ENCODE measurements at regions of chr10 and their contacts with region 1.

Region 1: DNA sequence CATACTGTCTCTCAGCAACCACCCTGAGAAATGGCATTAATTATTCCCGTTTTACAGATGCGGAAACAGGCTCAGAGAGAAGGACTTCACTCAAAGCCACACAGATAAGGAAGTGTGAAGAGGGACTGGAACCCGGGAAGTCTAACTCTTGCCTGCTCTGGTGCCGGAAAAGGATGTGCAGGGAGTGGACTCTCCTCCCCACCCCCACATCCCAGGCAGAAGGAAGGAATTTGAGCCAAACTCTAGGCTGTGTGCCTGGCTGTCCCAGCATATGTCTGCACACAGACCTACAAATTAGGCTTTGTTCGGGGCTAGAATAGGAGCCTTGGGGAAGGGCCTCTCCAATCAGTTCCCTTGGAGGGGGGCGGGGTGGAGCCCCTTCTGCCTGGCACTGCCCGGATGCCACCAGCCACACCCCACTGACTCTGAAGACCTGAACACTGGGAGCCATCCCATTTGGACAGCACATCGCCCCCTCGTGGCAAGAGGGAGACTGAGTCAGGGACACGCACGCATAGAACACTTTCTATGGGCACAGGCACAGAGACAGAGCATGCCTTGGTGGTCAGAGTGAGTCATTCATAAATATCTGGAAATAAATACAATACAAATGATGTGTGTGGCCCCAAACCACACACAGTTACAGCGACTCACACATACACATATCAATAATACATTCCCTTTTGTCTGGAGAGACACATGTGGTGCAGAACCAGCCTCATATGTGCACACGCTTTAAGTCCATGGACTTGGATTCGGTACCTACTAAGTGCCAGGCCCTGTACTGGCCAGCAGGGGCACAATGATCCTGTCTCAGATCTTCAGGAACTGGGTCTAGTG is 13.1 kb downstream of the LZTS2 start:
- DNase-seq: peak; percentile 85
- H3K4me3 Mint-ChIP-seq: no peak overlapping the region
- H3K27ac Mint-ChIP-seq: no peak overlapping the region
- H3K4me1 Mint-ChIP-seq: peaks cover 12% of the 10 kb centered on the region
- H3K27me3 Mint-ChIP-seq: peaks cover 29% of the 10 kb centered on the region

Region 2: DNA sequence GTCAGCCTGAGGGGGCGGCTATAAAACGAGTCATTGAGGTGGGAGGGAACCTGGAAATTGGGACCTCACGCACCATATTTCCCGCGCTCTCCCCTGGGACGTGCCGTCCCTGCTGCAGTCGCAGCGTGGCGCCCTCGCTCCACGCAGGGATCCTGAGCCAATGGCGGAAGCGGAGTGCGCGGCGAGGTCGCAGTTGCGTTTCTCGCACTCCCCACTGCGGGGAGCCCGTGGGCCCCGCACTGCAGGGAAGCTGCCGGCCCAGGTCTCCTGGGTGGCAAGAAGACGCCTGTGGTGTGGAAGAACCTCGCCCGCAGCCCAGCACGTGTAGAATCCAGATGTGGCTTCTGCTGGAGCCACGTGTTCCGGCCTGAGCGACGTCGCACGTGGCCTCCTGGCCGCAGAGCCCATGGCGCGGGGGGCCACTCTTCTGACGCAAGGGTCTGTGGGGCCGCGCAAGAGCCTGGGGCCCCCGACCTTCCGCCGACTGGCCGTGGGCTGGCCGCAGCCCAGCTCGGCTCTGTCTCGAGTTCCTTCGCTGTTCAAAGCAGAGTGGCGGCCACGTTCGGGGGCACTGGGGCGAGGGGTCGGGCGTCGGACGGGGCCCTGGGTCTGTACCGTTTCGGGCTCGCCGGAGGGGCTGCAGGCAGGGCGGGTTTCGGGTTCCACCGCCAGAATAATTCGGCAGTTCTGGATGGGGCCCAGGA is 450.6 kb before region 1 on chr10:
- CTCF ChIA-PET with region 1: interaction called, 4 read pairs
- intact Hi-C with region 1: loop called (anchors 1 kb)
- DNase-seq: peak; percentile 85
- H3K4me3 Mint-ChIP-seq: no peak overlapping the region
- H3K27ac Mint-ChIP-seq: no peak overlapping the region
- H3K4me1 Mint-ChIP-seq: peaks cover 9% of the 10 kb centered on the region
- H3K27me3 Mint-ChIP-seq: peaks cover 20% of the 10 kb centered on the region

Region 3: GRCh38 chr10:100827819-100828737 is 184.7 kb before region 1 on chr10:
- CTCF ChIA-PET with region 1: no interaction called
- intact Hi-C with region 1: loop called (anchors 5 kb)
- DNase-seq: peak; percentile 50
- H3K4me3 Mint-ChIP-seq: peak overlapping the region; percentile 66
- H3K27ac Mint-ChIP-seq: no peak overlapping the region
- H3K4me1 Mint-ChIP-seq: peaks cover 19% of the 10 kb centered on the region
- H3K27me3 Mint-ChIP-seq: peaks cover 74% of the 10 kb centered on the region

Region 4: GRCh38 chr10:100866575-100867098 is 146.1 kb before region 1 on chr10:
- CTCF ChIA-PET with region 1: no interaction called
- intact Hi-C with region 1: no loop called
- DNase-seq: no peak
- H3K4me3 Mint-ChIP-seq: no peak overlapping the region
- H3K27ac Mint-ChIP-seq: no peak overlapping the region
- H3K4me1 Mint-ChIP-seq: peaks cover 3% of the 10 kb centered on the region
- H3K27me3 Mint-ChIP-seq: peaks cover 24% of the 10 kb centered on the region

Region 5: DNA sequence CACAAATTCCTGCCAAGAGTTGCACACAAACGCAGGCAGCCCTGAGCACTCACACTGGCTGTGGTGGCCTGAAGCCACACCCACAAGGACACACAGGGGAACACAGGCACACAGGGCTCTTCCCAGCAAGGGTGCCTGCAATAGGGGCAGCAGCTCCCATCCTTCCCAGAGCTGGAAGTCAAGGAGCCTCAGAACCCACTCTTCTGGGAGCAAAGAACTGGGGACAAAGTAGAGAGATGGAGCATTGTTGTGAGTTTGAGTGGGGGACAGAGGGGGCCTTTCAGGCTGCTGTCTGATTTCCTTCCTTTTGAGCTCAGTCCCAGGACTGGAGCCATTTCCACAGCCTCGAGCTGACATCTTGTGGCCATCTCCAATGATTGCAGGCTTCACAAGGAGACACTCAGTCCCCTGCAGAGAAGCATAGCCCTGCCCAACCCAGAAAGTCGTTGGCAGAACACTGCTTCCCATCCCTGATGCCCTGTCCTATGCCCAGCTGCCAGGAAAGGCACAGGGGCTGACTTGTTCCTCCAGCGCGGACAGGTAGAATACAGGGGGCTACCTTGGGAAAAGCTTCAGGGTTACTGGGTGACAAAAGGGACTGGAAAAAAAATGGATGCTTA is 134.3 kb before region 1 on chr10:
- CTCF ChIA-PET with region 1: interaction called, 4 read pairs
- intact Hi-C with region 1: loop called (anchors 2 kb)
- DNase-seq: peak; percentile 64
- H3K4me3 Mint-ChIP-seq: no peak overlapping the region
- H3K27ac Mint-ChIP-seq: no peak overlapping the region
- H3K4me1 Mint-ChIP-seq: no peaks in the 10 kb centered on the region
- H3K27me3 Mint-ChIP-seq: peaks cover 10% of the 10 kb centered on the region

Region 6: DNA sequence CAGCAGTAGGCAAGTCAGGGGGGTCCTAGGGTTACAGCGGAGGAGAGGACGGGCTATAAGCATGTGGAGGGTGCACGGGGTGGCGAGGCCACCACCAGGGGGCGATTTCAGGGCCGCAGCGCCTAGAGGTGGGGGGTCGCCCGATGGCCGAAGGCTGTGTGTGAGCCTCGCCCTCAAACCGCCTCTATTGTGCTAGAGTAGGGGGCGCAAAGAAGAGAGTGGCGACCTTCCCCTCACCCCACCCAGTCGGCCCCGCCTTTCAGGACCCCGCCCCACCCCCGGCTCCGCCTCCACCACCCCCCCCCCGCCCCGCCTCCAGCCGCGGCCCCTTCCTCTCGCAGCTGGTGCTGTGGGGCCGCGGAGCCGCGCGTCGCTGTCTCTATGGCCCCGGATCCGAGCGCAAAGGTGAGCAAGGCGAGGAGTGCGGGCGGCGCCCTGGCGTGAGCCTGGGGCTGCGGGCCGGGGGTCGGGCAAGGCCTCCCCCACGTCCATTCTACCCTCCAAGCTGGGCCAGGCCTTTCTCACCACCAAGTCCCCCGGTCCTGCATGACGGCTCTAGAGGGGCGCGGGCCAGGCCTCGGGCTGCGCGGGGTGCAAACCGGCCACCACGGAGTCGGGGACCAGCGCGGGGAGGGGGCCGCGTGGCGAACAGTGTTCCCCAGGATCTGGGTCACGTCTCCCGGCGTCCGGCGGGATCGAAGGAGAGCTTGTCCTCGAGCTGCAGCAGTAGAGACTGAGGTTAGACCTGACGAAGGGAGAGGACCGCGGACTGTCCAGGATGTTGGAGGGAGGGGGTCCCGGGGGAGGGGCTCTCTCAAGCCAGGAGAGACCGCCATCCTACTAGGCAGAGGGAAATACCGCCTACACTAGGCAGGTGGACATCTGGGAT is 43.3 kb before region 1 on chr10 and contains the start of gene SEMA4G:
- CTCF ChIA-PET with region 1: interaction called, 8 read pairs
- intact Hi-C with region 1: loop called (anchors 5 kb)
- DNase-seq: peak; percentile 32
- H3K4me3 Mint-ChIP-seq: peak within 1 kb of the TSS; percentile 59
- H3K27ac Mint-ChIP-seq: no peak within 1 kb of the TSS
- H3K4me1 Mint-ChIP-seq: peaks cover 8% of the 10 kb centered on the region
- H3K27me3 Mint-ChIP-seq: no peaks in the 10 kb centered on the region
- total RNA-seq, gene SEMA4G: 0.48 to 0.59 TPM

Region 7: DNA sequence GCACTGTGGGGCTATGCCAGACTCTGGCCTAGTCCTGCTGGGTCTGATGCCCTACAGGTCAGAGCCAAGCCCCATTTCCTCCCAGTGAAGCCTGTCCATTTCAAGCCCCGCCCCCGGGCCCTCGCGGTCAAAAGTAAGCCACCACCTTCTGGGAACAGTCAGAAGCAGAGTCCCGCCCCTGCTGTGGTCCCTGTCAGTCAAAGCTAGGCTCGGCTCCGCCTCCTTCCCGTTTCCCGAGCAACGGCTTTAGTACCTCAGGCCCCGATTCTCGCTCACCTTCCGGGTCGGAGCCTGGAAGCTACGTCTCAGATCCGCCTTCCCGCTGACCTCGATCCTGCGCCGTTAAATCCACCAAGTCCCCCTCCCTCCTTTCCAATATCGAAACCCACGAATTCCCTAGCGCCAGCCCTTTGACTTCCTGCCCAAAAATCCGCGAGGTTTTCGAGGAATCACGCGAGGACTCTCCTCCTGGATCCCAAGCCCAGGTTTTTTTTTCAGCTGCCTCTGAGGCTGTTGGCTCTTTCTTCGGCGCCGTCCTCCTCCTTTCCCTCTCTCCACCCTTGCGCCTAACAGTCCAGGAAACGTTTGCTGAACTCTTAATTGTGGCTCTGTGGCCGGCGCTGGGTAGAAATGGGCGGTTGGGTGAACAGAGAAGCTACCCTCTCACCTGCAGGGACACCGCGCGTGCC is 30.1 kb after region 1 on chr10:
- CTCF ChIA-PET with region 1: interaction called, 19 read pairs
- intact Hi-C with region 1: no loop called
- DNase-seq: peak; percentile 97
- H3K4me3 Mint-ChIP-seq: peak overlapping the region; percentile 91
- H3K27ac Mint-ChIP-seq: peak overlapping the region; percentile 74
- H3K4me1 Mint-ChIP-seq: peaks cover 22% of the 10 kb centered on the region
- H3K27me3 Mint-ChIP-seq: peaks cover 17% of the 10 kb centered on the region

Region 8: DNA sequence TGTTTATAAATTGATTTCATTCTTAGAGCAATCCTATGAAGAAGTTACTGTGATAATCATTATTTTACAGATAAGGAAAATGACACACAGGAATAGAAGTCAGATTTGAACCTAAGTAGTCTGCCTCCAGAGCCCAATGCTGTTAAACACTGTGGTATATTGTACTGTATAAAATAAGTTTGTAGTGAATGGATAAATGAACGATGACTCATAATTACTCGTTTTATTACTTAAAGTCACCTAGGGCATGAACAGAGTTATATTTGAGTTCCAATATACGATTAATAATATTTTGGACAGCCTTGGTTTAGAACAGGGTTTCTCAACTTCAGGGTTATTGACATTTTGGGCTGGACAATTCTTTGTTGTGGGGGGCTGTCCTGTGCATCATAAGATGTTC is 333.4 kb after region 1 on chr10:
- CTCF ChIA-PET with region 1: no interaction called
- intact Hi-C with region 1: no loop called
- DNase-seq: no peak
- H3K4me3 Mint-ChIP-seq: no peak overlapping the region
- H3K27ac Mint-ChIP-seq: no peak overlapping the region
- H3K4me1 Mint-ChIP-seq: no peaks in the 10 kb centered on the region
- H3K27me3 Mint-ChIP-seq: peaks cover 3% of the 10 kb centered on the region